ENCODE measurements at regions of chr7 and their contacts with region 1.

Region 1: GRCh38 chr7:37916673-37917660 is at the start of gene SFRP4:
- DNase-seq: peak; percentile 67 to 76 (median 69)
- ATAC-seq: peak; percentile 50 to 73 (median 60)
- H3K4me3 ChIP-seq: peak within 1 kb of the TSS; percentile 33 to 68 (median 56)
- H3K27ac ChIP-seq: peak within 1 kb of the TSS in 8 of 12 donors; percentile 42 to 88 (median 74)
- H3K4me1 ChIP-seq: peaks cover 0 to 32% (median 13%) of the 10 kb centered on the region in 12 donors
- H3K27me3 ChIP-seq: peaks cover 0 to 21% (median 5%) of the 10 kb centered on the region in 9 donors
- CTCF ChIP-seq: peak; percentile 52 to 80 (median 66)
- POLR2A ChIP-seq: no peak
- total RNA-seq, gene SFRP4: 0.35 to 21.3 (median 2.0) TPM

Region 2: GRCh38 chr7:37942934-37943610 is 26.1 kb after region 1 on chr7:
- intact Hi-C with region 1: loop called in 1 of 10 experiments (anchors 2 kb)
- DNase-seq: peak; percentile 80 to 92 (median 86)
- ATAC-seq: peak; percentile 95 to 98 (median 98)
- H3K4me3 ChIP-seq: no peak overlapping the region
- H3K27ac ChIP-seq: peak overlapping the region; percentile 15 to 85 (median 73)
- H3K4me1 ChIP-seq: peaks cover 0 to 48% (median 26%) of the 10 kb centered on the region in 12 donors
- H3K27me3 ChIP-seq: no peaks in the 10 kb centered on the region
- CTCF ChIP-seq: no peak
- POLR2A ChIP-seq: no peak

Region 3: GRCh38 chr7:37987732-37988131 is 70.8 kb after region 1 on chr7:
- intact Hi-C with region 1: no loop called
- DNase-seq: no peak
- ATAC-seq: peak in 3 of 4 donors; percentile 58 to 78 (median 67)
- H3K4me3 ChIP-seq: no peak overlapping the region
- H3K27ac ChIP-seq: peak overlapping the region in 4 of 12 donors; percentile 10 to 49 (median 28)
- H3K4me1 ChIP-seq: peaks cover 0 to 12% (median 0%) of the 10 kb centered on the region in 12 donors
- H3K27me3 ChIP-seq: no peaks in the 10 kb centered on the region
- CTCF ChIP-seq: no peak
- POLR2A ChIP-seq: no peak

Region 4: GRCh38 chr7:38070718-38071117 is 153.8 kb after region 1 on chr7:
- intact Hi-C with region 1: loop called in 2 of 10 experiments (anchors 5 to 10 kb)
- DNase-seq: no peak
- ATAC-seq: peak in 3 of 4 donors; percentile 58 to 68 (median 66)
- H3K4me3 ChIP-seq: no peak overlapping the region
- H3K27ac ChIP-seq: no peak overlapping the region
- H3K4me1 ChIP-seq: peaks cover 0 to 10% (median 0%) of the 10 kb centered on the region in 12 donors
- H3K27me3 ChIP-seq: no peaks in the 10 kb centered on the region
- CTCF ChIP-seq: peak in 9 of 12 donors; percentile 18 to 62 (median 35)
- POLR2A ChIP-seq: no peak

Region 5: DNA sequence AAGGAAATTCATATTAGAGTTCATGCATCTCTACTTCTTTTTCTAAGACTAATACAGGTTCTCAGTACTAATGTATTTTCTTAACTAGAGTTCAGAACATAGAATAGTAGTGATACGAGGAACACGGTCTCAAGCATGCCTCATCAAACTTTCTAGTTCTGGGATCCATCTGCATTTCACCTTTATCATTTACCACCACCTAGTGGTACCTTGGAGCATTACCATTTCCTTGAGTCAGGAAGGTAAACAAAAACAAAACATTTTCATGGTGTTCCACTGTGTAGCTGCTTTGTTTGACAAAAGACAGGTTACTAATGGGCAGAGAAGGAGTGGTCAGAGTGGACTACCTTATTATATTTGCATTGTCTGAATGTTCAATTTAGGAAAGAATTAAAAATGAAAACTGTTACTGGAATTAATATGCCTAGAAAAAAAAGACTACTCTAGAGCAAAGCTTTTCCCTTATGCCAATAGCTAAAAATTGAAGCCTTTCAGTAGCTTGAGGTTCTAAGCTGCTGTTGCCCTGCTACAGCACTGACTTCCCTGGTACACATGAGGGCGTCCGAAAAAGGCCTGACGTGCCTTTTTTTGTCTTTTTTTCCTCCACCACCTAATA is 305.6 kb after region 1 on chr7:
- intact Hi-C with region 1: loop called in 4 of 10 experiments (anchors 5 kb)
- DNase-seq: no peak
- ATAC-seq: peak; percentile 68 to 81 (median 70)
- H3K4me3 ChIP-seq: no peak overlapping the region
- H3K27ac ChIP-seq: peak overlapping the region in 1 of 12 donors; percentile 11
- H3K4me1 ChIP-seq: peaks cover 0 to 10% (median 0%) of the 10 kb centered on the region in 12 donors
- H3K27me3 ChIP-seq: no peaks in the 10 kb centered on the region
- CTCF ChIP-seq: peak; percentile 83 to 95 (median 89)
- POLR2A ChIP-seq: no peak

Measured in heart left ventricle (tissue), 16 donors.